GM12878 (cell line): ENCODE measurements at regions of chr4 and their contacts with region 1.

Region 1: GRCh38 chr4:103091601-103092223 is 7.9 kb downstream of the BDH2 start:
- DNase-seq: peak; percentile 59
- ATAC-seq: peak; percentile 89
- H3K4me3 ChIP-seq: peak overlapping the region; percentile 16; the same call in 1 of the 2 replicates
- H3K27ac ChIP-seq: peak overlapping the region; percentile 27
- H3K4me1 ChIP-seq: peaks cover 6% of the 10 kb centered on the region; the same call in 1 of the 2 replicates
- H3K27me3 ChIP-seq: no peaks in the 10 kb centered on the region
- CTCF ChIP-seq: peak; percentile 44 to 73 (median 69); a peak in 5 of 6 replicates
- EP300 ChIP-seq: no peak
- POLR2A ChIP-seq: no peak
- RAD21 ChIP-seq: peak; percentile 98

Region 2: DNA sequence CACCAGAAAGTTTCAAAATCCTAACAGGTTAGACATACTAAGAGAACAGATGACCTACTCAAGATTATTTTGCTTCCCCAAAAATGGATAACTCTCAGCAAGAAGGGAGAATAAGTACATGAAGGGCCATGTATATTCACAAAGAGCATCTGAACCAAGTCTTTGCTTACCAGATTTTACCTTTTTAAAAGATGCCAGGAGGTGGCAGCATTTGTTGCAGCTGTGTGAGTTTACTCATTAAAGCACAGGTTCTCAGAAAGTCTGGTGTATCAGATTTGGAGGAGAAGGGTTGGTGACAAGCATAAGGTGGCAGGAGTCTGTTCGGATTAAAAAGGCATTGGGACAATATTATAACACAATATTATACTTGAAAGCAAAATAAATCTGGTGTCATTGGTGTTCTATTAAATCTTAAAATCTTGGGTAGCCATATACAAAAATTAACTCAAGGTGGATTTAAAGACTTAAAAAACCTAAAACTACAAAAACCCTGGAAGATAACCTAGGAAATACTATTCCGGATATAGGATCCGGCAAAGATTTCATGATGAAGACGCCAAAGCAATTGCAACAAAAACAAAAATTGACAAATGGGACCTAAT is 641.9 kb before region 1 on chr4:
- CTCF ChIA-PET with region 1: interaction called, 12 read pairs
- POLR2A ChIA-PET with region 1: no interaction called
- RAD21 ChIA-PET with region 1: interaction called, 3 read pairs
- SMC1A ChIA-PET with region 1: interaction called, 10 read pairs
- in situ Hi-C with region 1: loop called (anchors 5 kb)
- intact Hi-C with region 1: loop called (anchors 5 kb)
- DNase-seq: peak; percentile 45
- ATAC-seq: peak; percentile 94
- H3K4me3 ChIP-seq: no peak overlapping the region
- H3K27ac ChIP-seq: no peak overlapping the region
- H3K4me1 ChIP-seq: no peaks in the 10 kb centered on the region
- H3K27me3 ChIP-seq: no peaks in the 10 kb centered on the region
- CTCF ChIP-seq: peak; percentile 60 to 85 (median 63); a peak in 5 of 6 replicates
- EP300 ChIP-seq: no peak
- POLR2A ChIP-seq: no peak
- RAD21 ChIP-seq: peak; percentile 98

Region 3: GRCh38 chr4:102632241-102633065 is 459.3 kb before region 1 on chr4:
- CTCF ChIA-PET with region 1: interaction called, 12 read pairs
- POLR2A ChIA-PET with region 1: no interaction called
- RAD21 ChIA-PET with region 1: interaction called, 6 read pairs
- SMC1A ChIA-PET with region 1: interaction called, 3 read pairs
- in situ Hi-C with region 1: loop called (anchors 10 kb)
- intact Hi-C with region 1: no loop called
- DNase-seq: no peak
- ATAC-seq: no peak
- H3K4me3 ChIP-seq: no peak overlapping the region
- H3K27ac ChIP-seq: no peak overlapping the region
- H3K4me1 ChIP-seq: no peaks in the 10 kb centered on the region
- H3K27me3 ChIP-seq: no peaks in the 10 kb centered on the region
- CTCF ChIP-seq: no peak
- EP300 ChIP-seq: no peak
- POLR2A ChIP-seq: no peak
- RAD21 ChIP-seq: no peak

Region 4: DNA sequence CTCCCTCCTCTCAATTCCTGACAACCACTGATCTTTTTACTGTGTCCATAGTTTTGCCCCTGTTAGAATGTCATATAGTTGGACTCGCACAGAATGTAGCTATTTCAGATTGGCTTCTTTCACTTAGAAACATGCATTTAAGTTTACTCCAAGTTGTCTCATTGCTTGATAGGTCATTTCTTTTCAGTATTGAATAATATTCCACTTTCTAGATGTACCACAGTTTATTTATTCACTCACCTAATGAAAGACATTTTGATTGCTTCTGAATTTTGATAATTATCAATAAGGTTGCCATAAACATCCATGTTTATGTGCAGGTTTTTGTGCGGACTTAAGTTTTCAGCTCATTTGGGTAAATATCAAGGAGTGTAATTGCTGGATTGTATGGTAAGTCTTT is 110.7 kb before region 1 on chr4:
- CTCF ChIA-PET with region 1: no interaction called
- POLR2A ChIA-PET with region 1: no interaction called
- RAD21 ChIA-PET with region 1: no interaction called
- SMC1A ChIA-PET with region 1: no interaction called
- in situ Hi-C with region 1: no loop called
- intact Hi-C with region 1: no loop called
- DNase-seq: no peak
- ATAC-seq: no peak
- H3K4me3 ChIP-seq: no peak overlapping the region
- H3K27ac ChIP-seq: no peak overlapping the region
- H3K4me1 ChIP-seq: no peaks in the 10 kb centered on the region
- H3K27me3 ChIP-seq: no peaks in the 10 kb centered on the region
- CTCF ChIP-seq: no peak
- EP300 ChIP-seq: no peak
- POLR2A ChIP-seq: no peak
- RAD21 ChIP-seq: no peak

Region 5: GRCh38 chr4:103019308-103020124 is 72.2 kb before region 1 on chr4 and contains the start of gene SLC9B1:
- CTCF ChIA-PET with region 1: interaction called, 19 read pairs
- POLR2A ChIA-PET with region 1: interaction called, 3 read pairs
- RAD21 ChIA-PET with region 1: interaction called, 9 read pairs
- SMC1A ChIA-PET with region 1: interaction called, 10 read pairs
- in situ Hi-C with region 1: no loop called
- intact Hi-C with region 1: no loop called
- DNase-seq: peak; percentile 56
- ATAC-seq: peak; percentile 99
- H3K4me3 ChIP-seq: peak within 1 kb of the TSS; percentile 83
- H3K27ac ChIP-seq: peak within 1 kb of the TSS; percentile 87
- H3K4me1 ChIP-seq: peaks cover 5% of the 10 kb centered on the region; the same call in 1 of the 2 replicates
- H3K27me3 ChIP-seq: no peaks in the 10 kb centered on the region
- CTCF ChIP-seq: no peak
- EP300 ChIP-seq: no peak
- POLR2A ChIP-seq: peak; percentile 93
- RAD21 ChIP-seq: no peak
- polyA plus RNA-seq, gene SLC9B1: 1.9 to 2.1 TPM

Region 6: DNA sequence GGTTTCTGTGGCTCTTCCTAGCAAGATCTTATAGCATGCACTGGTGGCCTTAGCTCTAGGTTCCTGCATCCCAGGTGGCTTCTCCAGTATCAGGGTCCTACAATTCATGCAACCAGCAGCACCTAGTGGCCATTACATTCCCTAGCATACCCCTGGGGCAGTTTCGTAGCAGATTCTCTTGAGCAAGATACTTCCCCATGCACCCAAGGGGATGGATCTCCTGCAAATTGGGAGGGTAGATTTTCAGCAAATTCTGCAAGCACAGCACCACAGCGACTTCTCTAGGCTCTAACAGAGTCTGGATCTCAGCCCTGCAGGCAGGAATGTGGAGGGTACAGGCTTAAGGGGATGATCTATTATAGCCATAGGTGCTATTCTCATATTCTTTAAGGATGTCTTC is 59.1 kb before region 1 on chr4:
- CTCF ChIA-PET with region 1: interaction called, 16 read pairs
- POLR2A ChIA-PET with region 1: no interaction called
- RAD21 ChIA-PET with region 1: interaction called, 16 read pairs
- SMC1A ChIA-PET with region 1: interaction called, 12 read pairs
- in situ Hi-C with region 1: no loop called
- intact Hi-C with region 1: no loop called
- DNase-seq: no peak
- ATAC-seq: peak; percentile 92
- H3K4me3 ChIP-seq: no peak overlapping the region
- H3K27ac ChIP-seq: no peak overlapping the region
- H3K4me1 ChIP-seq: no peaks in the 10 kb centered on the region
- H3K27me3 ChIP-seq: no peaks in the 10 kb centered on the region
- CTCF ChIP-seq: peak; percentile 45 to 64 (median 62)
- EP300 ChIP-seq: no peak
- POLR2A ChIP-seq: no peak
- RAD21 ChIP-seq: peak; percentile 54

Region 7: GRCh38 chr4:103060453-103061148 is 31.1 kb before region 1 on chr4:
- CTCF ChIA-PET with region 1: interaction called, 13 read pairs
- POLR2A ChIA-PET with region 1: no interaction called
- RAD21 ChIA-PET with region 1: no interaction called
- SMC1A ChIA-PET with region 1: interaction called, 7 read pairs
- in situ Hi-C with region 1: no loop called
- intact Hi-C with region 1: no loop called
- DNase-seq: no peak
- ATAC-seq: no peak
- H3K4me3 ChIP-seq: no peak overlapping the region
- H3K27ac ChIP-seq: no peak overlapping the region
- H3K4me1 ChIP-seq: no peaks in the 10 kb centered on the region
- H3K27me3 ChIP-seq: no peaks in the 10 kb centered on the region
- CTCF ChIP-seq: no peak
- EP300 ChIP-seq: no peak
- POLR2A ChIP-seq: no peak
- RAD21 ChIP-seq: no peak

Region 8: GRCh38 chr4:103123114-103123513 is 31.4 kb after region 1 on chr4:
- CTCF ChIA-PET with region 1: no interaction called
- POLR2A ChIA-PET with region 1: no interaction called
- RAD21 ChIA-PET with region 1: no interaction called
- SMC1A ChIA-PET with region 1: no interaction called
- in situ Hi-C with region 1: no loop called
- intact Hi-C with region 1: no loop called
- DNase-seq: no peak
- ATAC-seq: no peak
- H3K4me3 ChIP-seq: no peak overlapping the region
- H3K27ac ChIP-seq: no peak overlapping the region
- H3K4me1 ChIP-seq: no peaks in the 10 kb centered on the region
- H3K27me3 ChIP-seq: no peaks in the 10 kb centered on the region
- CTCF ChIP-seq: no peak
- EP300 ChIP-seq: no peak
- POLR2A ChIP-seq: no peak
- RAD21 ChIP-seq: no peak